ENCODE measurements at regions of chr15 and their contacts with region 1.

Region 1: GRCh38 chr15:23758891-23759290 is 71.8 kb upstream of the NDN start:
- DNase-seq: no peak
- H3K4me3 ChIP-seq: no peak overlapping the region
- H3K27ac ChIP-seq: no peak overlapping the region
- H3K4me1 ChIP-seq: no peaks in the 10 kb centered on the region
- H3K27me3 ChIP-seq: no peaks in the 10 kb centered on the region
- CTCF ChIP-seq: no peak
- POLR2A ChIP-seq: no peak

Region 2: DNA sequence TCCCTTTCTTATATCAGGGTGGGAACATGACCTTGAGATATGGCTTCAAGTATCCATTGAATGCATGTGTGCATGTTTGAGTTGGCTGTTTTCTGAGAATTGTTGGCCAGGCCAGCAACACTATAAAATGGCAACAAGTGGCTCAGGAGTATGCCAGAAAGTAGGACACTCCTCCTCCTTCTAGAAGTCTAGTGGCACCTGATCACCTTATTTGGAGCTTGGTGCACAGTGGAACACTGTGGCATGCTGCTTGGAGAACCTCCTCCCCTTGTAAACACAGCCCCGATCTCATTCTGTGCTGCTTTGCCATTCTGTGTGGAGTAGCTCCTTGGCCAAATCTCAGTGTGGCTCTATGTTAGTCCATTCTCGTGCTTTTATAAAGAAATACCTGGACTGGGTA is 43.0 kb after region 1 on chr15:
- intact Hi-C with region 1: loop called (anchors 10 kb)
- DNase-seq: no peak
- H3K4me3 ChIP-seq: no peak overlapping the region
- H3K27ac ChIP-seq: no peak overlapping the region
- H3K4me1 ChIP-seq: no peaks in the 10 kb centered on the region
- H3K27me3 ChIP-seq: no peaks in the 10 kb centered on the region
- CTCF ChIP-seq: no peak
- POLR2A ChIP-seq: no peak